Activated CD4-positive, alpha-beta memory T cell treated with anti-CD3 and anti-CD28 coated beads, Interleukin-2, amount 10 ng/mL, durations not matched to agents 7 days and 5 days (primary cell): ENCODE measurements at regions of chr22 and their contacts with region 1.

Region 1: DNA sequence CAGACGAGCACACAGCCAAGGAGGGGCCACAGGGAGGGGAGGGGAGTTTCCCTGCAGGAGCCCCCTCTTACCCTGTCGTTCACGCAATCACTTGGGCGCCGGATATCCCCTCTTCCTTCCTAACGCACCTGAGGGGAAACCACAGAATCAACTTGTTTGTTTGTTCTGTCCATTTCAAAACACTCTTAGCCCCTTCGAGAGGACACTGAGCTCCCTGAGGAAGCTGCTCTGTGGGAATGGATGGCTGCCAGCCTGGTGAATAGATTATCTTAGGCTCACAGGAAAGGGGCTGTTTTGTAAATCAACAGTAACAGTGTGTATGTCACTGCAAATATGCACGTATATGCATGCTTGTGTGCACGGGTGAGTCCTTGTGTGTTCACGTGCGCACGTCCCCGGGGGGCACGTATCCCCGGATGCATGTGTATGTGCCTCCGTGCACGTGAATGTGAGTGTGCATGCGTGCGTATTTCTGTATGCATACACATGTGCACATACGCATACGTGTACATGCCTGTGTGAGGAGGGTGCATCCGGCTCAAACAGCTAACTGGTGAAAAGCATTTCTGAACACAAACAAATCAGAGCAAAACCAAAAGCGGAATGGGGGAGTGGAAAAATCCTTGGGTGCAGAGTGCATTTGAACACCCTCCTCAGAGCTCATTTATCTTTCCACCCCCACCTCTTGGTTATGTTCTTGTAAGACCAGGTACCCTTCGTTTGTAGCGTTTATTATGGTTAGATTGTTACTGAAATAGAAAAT is 7.2 kb downstream of the ARSA start:
- DNase-seq: peak; percentile 82
- H3K4me3 Mint-ChIP-seq: peak overlapping the region; percentile 82
- H3K27ac Mint-ChIP-seq: peak overlapping the region; percentile 99
- H3K4me1 Mint-ChIP-seq: peaks cover 38% of the 10 kb centered on the region
- H3K27me3 Mint-ChIP-seq: no peaks in the 10 kb centered on the region

Region 2: DNA sequence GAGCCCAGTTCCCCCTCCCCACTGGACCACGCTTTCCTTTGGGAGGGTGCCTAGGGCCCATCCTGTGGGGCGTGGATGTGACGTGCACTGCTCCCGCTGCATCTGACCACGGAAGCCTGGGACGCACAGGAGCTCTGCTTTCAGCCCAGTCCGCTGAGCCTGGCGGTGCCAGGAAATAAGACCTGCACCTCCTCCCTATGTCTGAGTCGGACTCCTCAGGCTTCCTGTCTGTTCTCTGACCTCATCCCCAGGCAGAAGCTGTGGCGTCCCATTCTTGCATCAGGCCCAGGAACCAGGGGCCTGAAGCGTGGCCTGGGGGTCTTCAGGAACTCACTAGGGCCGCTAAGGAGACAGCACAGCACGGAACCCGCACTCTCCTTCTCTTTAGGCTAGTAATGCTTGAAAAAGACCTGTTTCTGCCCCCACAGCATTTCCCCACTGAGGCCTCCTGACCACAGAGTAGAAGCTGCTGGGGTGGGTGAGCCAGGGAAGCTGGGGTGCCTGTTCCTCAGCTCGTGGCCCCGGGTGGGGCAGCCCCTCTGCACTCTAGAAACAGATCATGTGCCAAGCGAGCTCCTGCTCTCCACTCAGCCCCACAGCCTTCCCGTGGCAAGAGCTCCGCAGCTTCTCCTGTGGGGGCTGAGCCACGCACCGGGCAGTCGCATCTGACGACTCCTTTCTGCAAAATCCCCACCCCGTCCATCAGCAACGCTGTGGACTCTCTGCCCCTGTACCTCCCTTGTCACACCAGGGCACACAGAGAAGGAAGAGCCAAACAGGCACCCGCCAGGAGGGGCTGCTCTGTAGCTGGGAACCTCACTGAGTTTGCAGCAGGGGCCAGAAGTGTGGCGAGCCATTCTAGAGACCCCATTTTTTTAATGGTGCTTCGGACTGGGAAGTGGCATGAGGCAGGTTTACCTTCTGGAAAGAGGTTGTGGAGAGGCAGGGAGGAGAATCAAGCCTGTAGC is 508.3 kb before region 1 on chr22:
- CTCF ChIA-PET with region 1: no interaction called
- POLR2A ChIA-PET with region 1: no interaction called
- DNase-seq: peak; percentile 19
- H3K4me3 Mint-ChIP-seq: no peak overlapping the region
- H3K27ac Mint-ChIP-seq: peak overlapping the region; percentile 14
- H3K4me1 Mint-ChIP-seq: peaks cover 17% of the 10 kb centered on the region
- H3K27me3 Mint-ChIP-seq: peaks cover 10% of the 10 kb centered on the region

Region 3: GRCh38 chr22:50469377-50470305 is 151.1 kb before region 1 on chr22:
- CTCF ChIA-PET with region 1: interaction called, 11 read pairs
- POLR2A ChIA-PET with region 1: interaction called, 18 read pairs
- DNase-seq: peak; percentile 99
- H3K4me3 Mint-ChIP-seq: peak overlapping the region; percentile 68
- H3K27ac Mint-ChIP-seq: peak overlapping the region; percentile 97
- H3K4me1 Mint-ChIP-seq: peaks cover 67% of the 10 kb centered on the region
- H3K27me3 Mint-ChIP-seq: no peaks in the 10 kb centered on the region

Region 4: GRCh38 chr22:50507991-50508884 is 112.5 kb before region 1 on chr22 and contains the start of gene NCAPH2:
- CTCF ChIA-PET with region 1: interaction called, 29 read pairs
- POLR2A ChIA-PET with region 1: interaction called, 47 read pairs
- DNase-seq: peak; percentile 98
- H3K4me3 Mint-ChIP-seq: peak within 1 kb of the TSS; percentile 96
- H3K27ac Mint-ChIP-seq: peak within 1 kb of the TSS; percentile 95
- H3K4me1 Mint-ChIP-seq: peaks cover 36% of the 10 kb centered on the region
- H3K27me3 Mint-ChIP-seq: no peaks in the 10 kb centered on the region
- total RNA-seq, gene NCAPH2: 105 to 108 TPM

Region 5: GRCh38 chr22:50537765-50538164 is 83.0 kb before region 1 on chr22:
- CTCF ChIA-PET with region 1: interaction called, 44 read pairs
- POLR2A ChIA-PET with region 1: interaction called, 69 read pairs
- DNase-seq: no peak
- H3K4me3 Mint-ChIP-seq: peak overlapping the region; percentile 33
- H3K27ac Mint-ChIP-seq: peak overlapping the region; percentile 99
- H3K4me1 Mint-ChIP-seq: peaks cover 83% of the 10 kb centered on the region
- H3K27me3 Mint-ChIP-seq: no peaks in the 10 kb centered on the region

Region 6: GRCh38 chr22:50582562-50583293 is 38.0 kb before region 1 on chr22 and contains the start of gene CHKB:
- CTCF ChIA-PET with region 1: interaction called, 13 read pairs
- POLR2A ChIA-PET with region 1: interaction called, 27 read pairs
- DNase-seq: peak; percentile 99
- H3K4me3 Mint-ChIP-seq: peak within 1 kb of the TSS; percentile 81
- H3K27ac Mint-ChIP-seq: peak within 1 kb of the TSS; percentile 93
- H3K4me1 Mint-ChIP-seq: peaks cover 34% of the 10 kb centered on the region
- H3K27me3 Mint-ChIP-seq: no peaks in the 10 kb centered on the region
- total RNA-seq, gene CHKB: 101 to 111 TPM

Region 7: DNA sequence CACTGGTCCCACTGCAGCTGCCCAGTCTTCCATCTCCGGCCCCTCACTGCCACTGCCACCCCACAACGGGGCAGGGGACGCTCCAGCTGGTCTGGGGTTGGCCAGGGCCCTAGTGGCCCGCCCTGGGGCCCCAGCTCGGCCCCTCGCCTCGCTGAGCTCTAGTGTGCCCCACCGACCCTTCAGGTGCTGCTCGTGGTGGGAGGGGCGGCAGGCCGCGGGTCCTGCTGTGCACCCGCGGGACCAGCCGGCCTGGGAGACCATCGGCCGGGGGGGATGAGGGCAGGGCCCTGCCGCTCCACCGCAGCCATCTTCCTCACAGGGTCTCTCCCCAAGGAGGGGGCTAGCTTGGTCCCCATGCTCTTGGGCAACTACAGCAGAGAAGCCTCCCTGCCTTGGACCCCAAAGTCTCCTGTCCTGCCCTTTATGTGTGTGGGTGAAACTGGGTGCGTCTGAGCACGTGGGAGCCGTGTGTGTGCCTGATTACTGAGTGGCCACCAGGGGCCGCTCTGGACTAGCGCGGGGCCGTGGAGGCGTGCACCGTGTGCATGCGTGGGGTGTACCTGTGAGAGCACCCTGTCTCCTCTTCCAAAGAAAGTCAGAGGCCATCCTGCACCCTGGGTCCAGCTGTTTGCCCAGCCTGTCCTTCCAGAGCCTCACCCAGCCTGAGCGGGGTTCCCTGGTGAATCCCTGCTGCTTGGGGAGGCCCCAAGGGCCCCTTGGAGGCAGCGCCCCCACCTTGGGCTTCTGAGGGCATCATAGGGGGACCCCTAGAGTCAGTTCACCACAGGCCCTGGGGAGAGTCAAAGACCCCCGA is 111.2 kb after region 1 on chr22:
- CTCF ChIA-PET with region 1: no interaction called
- POLR2A ChIA-PET with region 1: no interaction called
- DNase-seq: peak; percentile 60
- H3K4me3 Mint-ChIP-seq: no peak overlapping the region
- H3K27ac Mint-ChIP-seq: no peak overlapping the region
- H3K4me1 Mint-ChIP-seq: peaks cover 2% of the 10 kb centered on the region
- H3K27me3 Mint-ChIP-seq: peaks cover 5% of the 10 kb centered on the region